Panc1 (cell line): ENCODE measurements at regions of chr7 and their contacts with region 1.

Region 1: DNA sequence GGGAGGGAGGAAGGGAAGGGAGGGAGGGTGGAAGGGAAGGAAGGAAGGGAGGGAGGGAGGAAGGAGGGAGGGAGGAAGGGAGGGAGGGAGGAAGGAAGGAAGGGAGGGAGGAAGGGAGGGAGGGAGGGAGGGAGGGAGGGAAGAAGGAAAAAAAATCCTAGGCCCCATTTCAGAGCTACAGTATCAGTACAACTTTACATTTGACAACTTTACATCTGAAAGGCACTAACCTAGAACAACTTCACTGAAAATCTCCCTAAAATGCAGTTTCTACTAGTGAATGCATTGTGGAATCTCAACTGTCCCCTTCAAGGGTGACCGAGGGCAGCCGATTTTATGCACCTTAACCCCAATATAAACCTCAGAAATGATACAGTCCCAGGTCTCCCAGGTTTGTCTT is 259.8 kb upstream of the GALNT17 start:
- DNase-seq: no peak
- ATAC-seq: no peak
- H3K4me3 ChIP-seq: no peak overlapping the region
- H3K27ac ChIP-seq: no peak overlapping the region
- H3K4me1 ChIP-seq: no peaks in the 10 kb centered on the region
- H3K27me3 ChIP-seq: no peaks in the 10 kb centered on the region
- CTCF ChIP-seq: no peak

Region 2: GRCh38 chr7:71739520-71740173 is 867.5 kb after region 1 on chr7:
- CTCF ChIA-PET with region 1: interaction called, 10 read pairs
- POLR2A ChIA-PET with region 1: no interaction called
- in situ Hi-C with region 1: no loop called
- intact Hi-C with region 1: no loop called
- DNase-seq: no peak
- ATAC-seq: no peak
- H3K4me3 ChIP-seq: no peak overlapping the region
- H3K27ac ChIP-seq: no peak overlapping the region
- H3K4me1 ChIP-seq: no peaks in the 10 kb centered on the region
- H3K27me3 ChIP-seq: peaks cover 2% of the 10 kb centered on the region; the same call in 1 of the 2 replicates
- CTCF ChIP-seq: no peak